ENCODE measurements at regions of chr11 and their contacts with region 1.

Region 1: GRCh38 chr11:90204832-90205646 is 17.8 kb downstream of the CHORDC1 start:
- DNase-seq: peak; percentile 62
- ATAC-seq: peak; percentile 66
- H3K4me3 ChIP-seq: no peak overlapping the region
- H3K4me3 Mint-ChIP-seq: no peak overlapping the region
- H3K27ac ChIP-seq: no peak overlapping the region
- H3K27ac Mint-ChIP-seq: no peak overlapping the region
- H3K4me1 ChIP-seq: no peaks in the 10 kb centered on the region
- H3K4me1 Mint-ChIP-seq: no peaks in the 10 kb centered on the region
- H3K27me3 ChIP-seq: no peaks in the 10 kb centered on the region
- H3K27me3 Mint-ChIP-seq: no peaks in the 10 kb centered on the region
- CTCF ChIP-seq: peak; percentile 98

Region 2: DNA sequence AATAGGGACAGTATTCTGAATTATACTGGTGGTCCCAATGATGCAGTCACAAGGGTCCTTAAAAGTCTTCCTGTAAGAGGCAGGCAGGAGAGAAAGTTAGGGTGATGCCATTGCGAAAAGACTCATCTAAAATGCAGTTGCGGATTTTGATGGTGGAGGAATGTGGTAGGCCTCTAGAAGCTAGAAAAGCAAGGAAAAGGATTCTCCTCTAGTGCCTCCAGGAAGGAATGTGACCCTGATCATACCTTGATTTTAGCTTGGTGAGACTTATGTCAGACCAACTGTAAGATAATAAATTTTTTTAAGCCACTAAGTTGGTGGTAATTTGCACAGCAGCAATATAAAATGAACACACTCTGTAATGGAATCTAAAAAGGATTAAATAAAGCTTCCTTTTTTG is 16.0 kb before region 1 on chr11:
- CTCF ChIA-PET with region 1: interaction called, 20 read pairs
- POLR2A ChIA-PET with region 1: no interaction called
- intact Hi-C with region 1: no loop called
- DNase-seq: no peak
- ATAC-seq: no peak
- H3K4me3 ChIP-seq: no peak overlapping the region
- H3K4me3 Mint-ChIP-seq: no peak overlapping the region
- H3K27ac ChIP-seq: no peak overlapping the region
- H3K27ac Mint-ChIP-seq: no peak overlapping the region
- H3K4me1 ChIP-seq: no peaks in the 10 kb centered on the region
- H3K4me1 Mint-ChIP-seq: no peaks in the 10 kb centered on the region
- H3K27me3 ChIP-seq: no peaks in the 10 kb centered on the region
- H3K27me3 Mint-ChIP-seq: no peaks in the 10 kb centered on the region
- CTCF ChIP-seq: no peak

Region 3: GRCh38 chr11:90222459-90223247 is 17.6 kb after region 1 on chr11 and contains the start of gene CHORDC1:
- CTCF ChIA-PET with region 1: interaction called, 3 read pairs
- POLR2A ChIA-PET with region 1: no interaction called
- intact Hi-C with region 1: loop called (anchors 2 kb)
- DNase-seq: peak; percentile 92
- ATAC-seq: peak; percentile 92
- H3K4me3 ChIP-seq: peak within 1 kb of the TSS; percentile 69 to 88 (median 84)
- H3K4me3 Mint-ChIP-seq: peak within 1 kb of the TSS; percentile 92
- H3K27ac ChIP-seq: peak within 1 kb of the TSS; percentile 86 to 88
- H3K27ac Mint-ChIP-seq: peak within 1 kb of the TSS; percentile 93
- H3K4me1 ChIP-seq: peaks cover 20 to 34% of the 10 kb centered on the region in 2 donors
- H3K4me1 Mint-ChIP-seq: peaks cover 49% of the 10 kb centered on the region
- H3K27me3 ChIP-seq: no peaks in the 10 kb centered on the region
- H3K27me3 Mint-ChIP-seq: peaks cover 6% of the 10 kb centered on the region
- CTCF ChIP-seq: no peak
- total RNA-seq, gene CHORDC1: 70.6 and 76.9 TPM in 2 replicates

Region 4: GRCh38 chr11:90294091-90294490 is 89.1 kb after region 1 on chr11:
- CTCF ChIA-PET with region 1: no interaction called
- POLR2A ChIA-PET with region 1: no interaction called
- intact Hi-C with region 1: no loop called
- DNase-seq: no peak
- ATAC-seq: no peak
- H3K4me3 ChIP-seq: no peak overlapping the region
- H3K4me3 Mint-ChIP-seq: no peak overlapping the region
- H3K27ac ChIP-seq: no peak overlapping the region
- H3K27ac Mint-ChIP-seq: no peak overlapping the region
- H3K4me1 ChIP-seq: no peaks in the 10 kb centered on the region
- H3K4me1 Mint-ChIP-seq: no peaks in the 10 kb centered on the region
- H3K27me3 ChIP-seq: no peaks in the 10 kb centered on the region
- H3K27me3 Mint-ChIP-seq: peaks cover 3% of the 10 kb centered on the region
- CTCF ChIP-seq: no peak

Region 5: GRCh38 chr11:90476442-90477007 is 271.5 kb after region 1 on chr11:
- CTCF ChIA-PET with region 1: no interaction called
- POLR2A ChIA-PET with region 1: no interaction called
- intact Hi-C with region 1: no loop called
- DNase-seq: peak; percentile 18
- ATAC-seq: no peak
- H3K4me3 ChIP-seq: no peak overlapping the region
- H3K4me3 Mint-ChIP-seq: no peak overlapping the region
- H3K27ac ChIP-seq: no peak overlapping the region
- H3K27ac Mint-ChIP-seq: no peak overlapping the region
- H3K4me1 ChIP-seq: no peaks in the 10 kb centered on the region
- H3K4me1 Mint-ChIP-seq: no peaks in the 10 kb centered on the region
- H3K27me3 ChIP-seq: no peaks in the 10 kb centered on the region
- H3K27me3 Mint-ChIP-seq: no peaks in the 10 kb centered on the region
- CTCF ChIP-seq: no peak